Mammary epithelial cell (primary cell): ENCODE measurements at regions of chr4 and their contacts with region 1.

Region 1: DNA sequence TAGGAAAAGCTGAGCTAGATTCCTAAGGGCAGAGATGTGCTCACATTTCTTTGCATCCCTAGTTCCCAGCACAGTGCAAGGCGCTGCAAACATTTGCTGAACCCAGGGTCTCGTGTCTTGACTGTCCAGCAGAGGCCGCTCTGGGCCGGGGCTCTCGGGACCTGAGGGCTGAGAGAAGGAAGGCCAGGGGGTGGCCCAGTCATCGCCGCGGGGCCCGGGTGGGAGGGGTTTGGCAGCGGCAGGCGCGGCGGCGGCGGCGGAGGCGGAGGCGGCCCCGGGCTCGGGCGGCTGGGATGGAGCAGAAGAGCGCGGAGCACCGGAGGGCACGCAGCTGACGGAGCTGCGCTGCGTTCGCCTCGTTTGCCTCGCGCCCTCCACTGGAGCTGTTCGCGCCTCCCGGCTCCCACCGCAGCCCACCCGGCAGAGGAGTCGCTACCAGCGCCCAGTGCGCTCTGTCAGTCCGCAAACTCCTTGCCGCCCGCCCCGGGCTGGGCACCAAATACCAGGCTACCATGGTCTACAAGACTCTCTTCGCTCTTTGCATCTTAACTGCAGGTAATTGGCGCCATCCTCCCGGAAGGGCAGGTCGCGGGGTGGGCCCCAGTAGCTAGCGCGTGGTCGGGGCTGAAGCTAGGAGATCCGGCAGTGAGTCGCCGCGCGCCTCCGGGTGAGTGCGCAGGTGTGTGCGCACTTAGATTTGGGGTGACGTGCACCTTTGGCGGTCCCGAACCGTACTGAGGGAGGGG is at the start of gene PARM1:
- DNase-seq: peak; percentile 61
- H3K4me3 ChIP-seq: peak within 1 kb of the TSS; percentile 39 to 47 (median 44)
- H3K27ac ChIP-seq: no peak within 1 kb of the TSS
- H3K4me1 ChIP-seq: peaks cover 17% of the 10 kb centered on the region
- H3K27me3 ChIP-seq: peaks cover 21% of the 10 kb centered on the region
- CTCF ChIP-seq: peak; percentile 39 to 64
- total RNA-seq, gene PARM1: 0.33 TPM in 1 of 2 donors, not detected in the other

Region 2: GRCh38 chr4:74874753-74875367 is 58.1 kb before region 1 on chr4:
- CTCF ChIA-PET with region 1: no interaction called
- dilution Hi-C with region 1: no loop called
- in situ Hi-C with region 1: no loop called
- intact Hi-C with region 1: loop called (anchors 5 kb)
- DNase-seq: peak; percentile 66
- H3K4me3 ChIP-seq: no peak overlapping the region
- H3K27ac ChIP-seq: no peak overlapping the region
- H3K4me1 ChIP-seq: no peaks in the 10 kb centered on the region
- H3K27me3 ChIP-seq: peaks cover 4% of the 10 kb centered on the region
- CTCF ChIP-seq: peak; percentile 92 to 95

Region 3: GRCh38 chr4:75110061-75110460 is 177.1 kb after region 1 on chr4:
- CTCF ChIA-PET with region 1: no interaction called
- dilution Hi-C with region 1: no loop called
- in situ Hi-C with region 1: no loop called
- intact Hi-C with region 1: no loop called
- DNase-seq: no peak
- H3K4me3 ChIP-seq: no peak overlapping the region
- H3K27ac ChIP-seq: no peak overlapping the region
- H3K4me1 ChIP-seq: no peaks in the 10 kb centered on the region
- H3K27me3 ChIP-seq: peaks cover 4% of the 10 kb centered on the region
- CTCF ChIP-seq: no peak

Region 4: GRCh38 chr4:75289914-75290582 is 357.1 kb after region 1 on chr4:
- CTCF ChIA-PET with region 1: no interaction called
- dilution Hi-C with region 1: no loop called
- in situ Hi-C with region 1: no loop called
- intact Hi-C with region 1: loop called (anchors 1 kb)
- DNase-seq: peak; percentile 7
- H3K4me3 ChIP-seq: no peak overlapping the region
- H3K27ac ChIP-seq: no peak overlapping the region
- H3K4me1 ChIP-seq: no peaks in the 10 kb centered on the region
- H3K27me3 ChIP-seq: peaks cover 6% of the 10 kb centered on the region
- CTCF ChIP-seq: peak; percentile 41 to 54

Region 5: GRCh38 chr4:75469896-75470295 is 536.9 kb after region 1 on chr4:
- CTCF ChIA-PET with region 1: no interaction called
- dilution Hi-C with region 1: no loop called
- in situ Hi-C with region 1: no loop called
- intact Hi-C with region 1: loop called (anchors 2 kb)
- DNase-seq: no peak
- H3K4me3 ChIP-seq: no peak overlapping the region
- H3K27ac ChIP-seq: no peak overlapping the region
- H3K4me1 ChIP-seq: no peaks in the 10 kb centered on the region
- H3K27me3 ChIP-seq: no peaks in the 10 kb centered on the region
- CTCF ChIP-seq: no peak